ENCODE measurements at regions of chr11 and their contacts with region 1.

Region 1: DNA sequence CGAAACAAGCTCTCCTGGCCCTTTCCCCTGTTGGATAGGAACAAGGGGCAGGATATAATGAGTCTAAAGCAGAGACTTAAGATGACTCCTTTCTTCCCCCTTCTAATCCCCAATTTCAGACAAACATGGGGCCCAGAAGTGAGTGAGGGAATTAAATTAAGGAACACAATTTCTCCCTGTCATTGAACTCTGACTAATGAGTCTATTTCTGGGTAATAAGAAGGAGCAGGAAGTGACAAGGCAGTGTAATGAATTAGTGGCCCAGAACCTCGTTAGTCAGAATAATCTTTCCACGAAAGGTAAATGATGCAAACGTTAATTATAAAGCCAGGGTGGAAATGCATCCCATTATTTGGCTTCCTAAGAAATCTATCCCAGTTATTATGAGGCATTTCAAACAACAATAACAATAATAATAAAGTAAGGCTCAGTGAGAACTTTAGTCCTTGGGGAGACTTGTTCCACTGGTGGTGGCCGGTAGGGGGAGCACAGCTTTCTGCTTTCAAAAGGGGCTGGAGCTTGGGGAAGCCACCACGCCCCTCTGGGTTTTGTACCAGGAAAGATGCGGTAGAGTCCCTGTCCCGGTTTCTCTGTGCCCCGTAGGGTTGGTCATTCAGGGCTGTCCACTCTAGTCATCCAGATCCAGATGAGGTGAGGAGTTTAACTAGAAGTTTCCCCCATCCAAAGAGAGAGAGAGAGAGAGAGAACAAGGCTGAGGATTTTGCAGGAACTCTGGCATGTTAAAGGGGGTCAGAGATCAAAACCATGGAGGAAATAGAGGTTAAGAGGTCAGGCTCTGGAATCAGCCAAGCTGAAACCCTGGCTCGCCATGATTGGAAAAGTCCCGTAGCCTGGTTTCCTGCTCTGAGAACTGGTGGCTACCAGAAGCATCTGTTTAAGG is 298.3 kb downstream of the NTM start:
- DNase-seq: peak; percentile 84
- ATAC-seq: peak; percentile 68
- H3K4me3 Mint-ChIP-seq: no peak overlapping the region
- H3K27ac Mint-ChIP-seq: no peak overlapping the region
- H3K4me1 Mint-ChIP-seq: peaks cover 15% of the 10 kb centered on the region
- H3K27me3 Mint-ChIP-seq: no peaks in the 10 kb centered on the region; the same call in 1 of the 2 replicates
- CTCF ChIP-seq: peak; percentile 72; the same call in 1 of the 2 replicates

Region 2: DNA sequence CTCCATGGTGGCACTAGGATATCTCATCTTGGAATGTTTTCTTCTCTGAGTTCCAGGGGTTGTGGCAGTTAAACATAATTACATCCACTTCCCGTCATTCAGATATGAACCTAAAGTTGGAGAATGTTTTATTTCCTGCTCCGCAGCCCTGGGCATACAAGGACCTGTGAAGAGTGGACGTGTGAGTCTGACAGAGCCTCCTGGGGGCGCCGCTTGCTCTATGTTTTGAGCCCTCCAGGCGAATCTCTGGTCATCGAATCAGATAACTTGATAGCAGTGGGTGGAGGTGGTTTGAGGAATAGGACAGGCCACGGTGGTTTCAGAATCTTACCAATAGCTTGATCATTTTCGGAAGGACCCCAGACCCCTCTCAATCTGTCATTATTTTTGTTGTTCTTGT is 124.2 kb before region 1 on chr11:
- CTCF ChIA-PET with region 1: interaction called, 15 read pairs
- POLR2A ChIA-PET with region 1: no interaction called
- DNase-seq: peak; percentile 68
- ATAC-seq: peak; percentile 93
- H3K4me3 Mint-ChIP-seq: no peak overlapping the region
- H3K27ac Mint-ChIP-seq: no peak overlapping the region
- H3K4me1 Mint-ChIP-seq: peaks cover 25% of the 10 kb centered on the region
- H3K27me3 Mint-ChIP-seq: no peaks in the 10 kb centered on the region
- CTCF ChIP-seq: no peak

Region 3: DNA sequence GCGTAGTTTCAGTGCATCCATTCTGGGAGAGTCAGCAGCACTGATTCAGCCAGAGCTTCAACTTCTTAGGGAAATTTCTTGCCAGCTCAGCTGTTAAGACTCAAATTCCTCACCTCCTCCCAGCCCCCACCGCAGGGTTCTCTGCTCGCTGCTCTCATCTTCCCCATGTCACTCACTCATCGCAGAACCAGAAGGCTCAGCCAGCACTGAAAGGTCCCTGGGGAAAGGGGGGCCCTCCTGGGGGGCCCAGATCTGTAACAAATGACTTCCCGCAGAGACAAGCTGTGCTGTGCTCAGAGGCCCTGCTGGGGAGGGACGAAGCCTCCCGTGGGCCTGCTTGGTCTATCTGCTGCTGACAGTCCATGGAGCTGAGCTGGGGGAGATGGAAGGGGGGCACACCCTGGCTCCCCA is 77.7 kb before region 1 on chr11:
- CTCF ChIA-PET with region 1: interaction called, 45 read pairs
- POLR2A ChIA-PET with region 1: no interaction called
- DNase-seq: peak; percentile 45
- ATAC-seq: peak; percentile 66
- H3K4me3 Mint-ChIP-seq: no peak overlapping the region
- H3K27ac Mint-ChIP-seq: no peak overlapping the region
- H3K4me1 Mint-ChIP-seq: peaks cover 56% of the 10 kb centered on the region
- H3K27me3 Mint-ChIP-seq: no peaks in the 10 kb centered on the region; the same call in 1 of the 2 replicates
- CTCF ChIP-seq: no peak

Region 4: DNA sequence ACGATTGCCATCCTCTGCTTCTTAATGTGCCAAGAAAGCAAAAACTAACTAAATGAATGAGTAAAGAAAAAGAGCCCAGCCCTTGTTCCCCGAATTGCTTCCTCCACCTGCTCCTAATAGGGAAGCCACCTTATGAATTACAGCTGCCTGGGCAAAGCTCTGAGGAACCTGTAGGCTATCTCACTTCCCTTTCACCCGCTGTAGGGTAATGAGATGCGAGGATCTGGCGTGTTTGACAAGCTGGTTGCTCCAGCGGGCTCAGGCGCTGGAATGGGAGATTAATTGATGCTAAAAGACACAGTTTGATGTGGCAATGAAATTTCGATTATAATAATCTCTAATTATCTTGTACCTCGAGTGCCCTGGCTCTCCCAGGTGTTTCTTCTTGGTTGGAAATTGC is 42.0 kb before region 1 on chr11:
- CTCF ChIA-PET with region 1: interaction called, 10 read pairs
- POLR2A ChIA-PET with region 1: no interaction called
- DNase-seq: no peak
- ATAC-seq: peak; percentile 51; the same call in 1 of the 2 replicates
- H3K4me3 Mint-ChIP-seq: no peak overlapping the region
- H3K27ac Mint-ChIP-seq: no peak overlapping the region
- H3K4me1 Mint-ChIP-seq: peaks cover 26% of the 10 kb centered on the region
- H3K27me3 Mint-ChIP-seq: no peaks in the 10 kb centered on the region
- CTCF ChIP-seq: no peak

Region 5: GRCh38 chr11:131688051-131688698 is 19.4 kb after region 1 on chr11:
- CTCF ChIA-PET with region 1: interaction called, 33 read pairs
- POLR2A ChIA-PET with region 1: no interaction called
- DNase-seq: peak; percentile 81
- ATAC-seq: peak; percentile 62
- H3K4me3 Mint-ChIP-seq: no peak overlapping the region
- H3K27ac Mint-ChIP-seq: no peak overlapping the region
- H3K4me1 Mint-ChIP-seq: 0 out of 2 replicates have a peak, but pooled peaks cover 6% of the 10 kb centered on the region
- H3K27me3 Mint-ChIP-seq: peaks cover 24% of the 10 kb centered on the region
- CTCF ChIP-seq: peak; percentile 81